Activated CD4-positive, alpha-beta T cell treated with anti-CD3 and anti-CD28 coated beads, Interleukin-2, amount 10 ng/mL, durations not matched to agents 24 days and 14 days (primary cell): ENCODE measurements at regions of chr10 and their contacts with region 1.

Region 1: DNA sequence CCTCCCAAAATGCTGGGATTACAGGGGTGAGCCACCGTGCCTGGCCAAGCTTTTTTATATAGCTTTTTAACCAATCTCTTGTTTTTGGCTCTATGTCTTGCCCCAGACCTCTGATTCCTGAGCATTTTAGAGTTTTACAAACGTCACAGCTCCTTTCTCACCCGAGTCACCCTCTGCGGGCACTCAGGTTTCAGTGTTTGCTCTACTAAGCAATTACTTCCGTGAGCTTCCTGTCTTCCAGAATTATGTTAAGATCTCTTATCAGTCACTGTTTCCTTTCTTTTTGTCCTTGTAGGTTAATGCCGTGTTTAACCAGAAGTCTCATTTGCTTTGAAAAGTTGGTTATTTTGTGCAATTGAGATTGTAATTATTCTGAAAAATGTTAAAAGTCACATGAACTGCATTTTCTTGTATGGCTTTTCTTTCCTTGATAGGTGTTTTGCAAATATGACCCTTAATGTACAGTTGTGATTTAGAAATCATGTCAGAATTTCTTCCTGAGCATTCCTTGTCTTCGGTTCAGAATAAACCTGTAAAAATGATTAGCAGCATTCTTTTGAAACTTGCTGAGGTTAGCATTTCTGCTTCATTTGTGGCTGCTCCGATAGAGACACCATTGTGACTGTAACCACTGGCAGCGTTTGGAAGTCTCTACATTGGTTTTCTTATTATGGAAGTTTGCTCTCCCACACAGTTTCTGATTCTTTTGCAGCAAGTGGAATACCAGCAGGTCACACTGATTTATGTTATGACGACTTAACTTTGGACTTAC is 4.5 kb upstream of the HKDC1 start:
- DNase-seq: peak; percentile 78
- H3K4me3 Mint-ChIP-seq: peak overlapping the region; percentile 57
- H3K27ac Mint-ChIP-seq: peak overlapping the region; percentile 79
- H3K4me1 Mint-ChIP-seq: peaks cover 39% of the 10 kb centered on the region
- H3K27me3 Mint-ChIP-seq: no peaks in the 10 kb centered on the region

Region 2: GRCh38 chr10:69202332-69202731 is 13.3 kb before region 1 on chr10:
- intact Hi-C with region 1: loop called (anchors 1 kb)
- DNase-seq: peak; percentile 77
- H3K4me3 Mint-ChIP-seq: peak overlapping the region; percentile 62
- H3K27ac Mint-ChIP-seq: peak overlapping the region; percentile 66
- H3K4me1 Mint-ChIP-seq: peaks cover 43% of the 10 kb centered on the region
- H3K27me3 Mint-ChIP-seq: no peaks in the 10 kb centered on the region

Region 3: GRCh38 chr10:69237528-69238159 is 22.1 kb after region 1 on chr10:
- intact Hi-C with region 1: no loop called
- DNase-seq: peak; percentile 96
- H3K4me3 Mint-ChIP-seq: no peak overlapping the region
- H3K27ac Mint-ChIP-seq: no peak overlapping the region
- H3K4me1 Mint-ChIP-seq: peaks cover 20% of the 10 kb centered on the region
- H3K27me3 Mint-ChIP-seq: no peaks in the 10 kb centered on the region